CD4-positive, alpha-beta memory T cell (primary cell): ENCODE measurements at regions of chr1 and their contacts with region 1.

Region 1: DNA sequence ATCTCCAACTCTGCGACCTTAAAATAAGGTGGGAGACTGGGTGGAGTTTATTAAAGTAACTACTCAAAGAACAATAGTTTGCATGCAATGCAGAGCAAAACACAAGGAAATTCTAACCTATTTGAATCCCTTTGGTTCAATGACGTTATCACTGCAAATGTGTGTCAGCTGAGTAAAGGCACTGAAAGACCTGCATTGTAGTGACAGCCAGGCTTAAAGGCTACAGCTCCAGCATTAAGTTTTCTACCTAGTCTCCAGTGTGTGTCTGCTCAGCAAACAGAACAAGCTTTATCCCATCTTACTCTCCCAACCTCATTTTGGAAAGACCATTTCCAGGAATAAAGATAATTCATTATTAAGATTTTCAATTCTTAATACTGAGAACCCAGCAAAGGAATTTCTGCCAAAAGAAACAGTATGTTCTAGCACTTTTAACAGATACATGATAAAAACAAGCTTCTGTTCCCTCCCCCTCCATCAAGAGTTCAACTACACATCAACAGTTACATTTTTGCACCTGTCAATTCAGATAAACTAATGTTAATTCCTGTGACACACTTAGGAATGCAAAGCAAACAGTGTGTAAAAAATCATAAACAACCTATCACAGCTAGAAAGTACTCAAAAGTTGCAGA is 14.2 kb downstream of the PTP4A2 start:
- DNase-seq: no peak
- H3K4me3 ChIP-seq: no peak overlapping the region
- H3K4me3 Mint-ChIP-seq: peak overlapping the region; percentile 59 to 89 (median 80)
- H3K27ac ChIP-seq: peak overlapping the region; percentile 22
- H3K27ac Mint-ChIP-seq: peak overlapping the region; percentile 50 to 92 (median 81)
- H3K4me1 ChIP-seq: peaks cover 85% of the 10 kb centered on the region
- H3K4me1 Mint-ChIP-seq: peaks cover 53 to 88% (median 71%) of the 10 kb centered on the region in 4 donors
- H3K27me3 ChIP-seq: no peaks in the 10 kb centered on the region
- H3K27me3 Mint-ChIP-seq: no peaks in the 10 kb centered on the region

Region 2: DNA sequence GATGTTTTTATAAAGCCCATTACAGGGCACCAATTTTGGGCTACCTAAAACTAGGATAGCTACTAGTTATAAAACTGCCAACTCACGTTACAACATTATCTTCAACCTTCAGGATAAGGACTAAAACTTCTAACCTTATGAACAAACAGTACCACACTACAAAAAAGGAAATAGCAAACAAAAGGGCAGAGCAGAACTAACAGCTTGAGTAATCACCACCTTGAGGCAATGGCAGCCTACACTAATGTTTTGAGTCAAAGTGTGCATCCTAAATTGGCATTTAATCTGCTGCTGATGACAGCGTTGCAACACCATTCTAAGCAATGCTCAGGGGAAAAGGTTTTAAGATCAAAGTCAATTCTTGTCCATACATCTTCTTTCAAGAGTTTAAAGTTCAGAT is 13.1 kb before region 1 on chr1:
- CTCF ChIA-PET with region 1: interaction called, 4 read pairs
- POLR2A ChIA-PET with region 1: interaction called, 10 read pairs
- intact Hi-C with region 1: loop called (anchors 2 kb)
- DNase-seq: no peak
- H3K4me3 ChIP-seq: no peak overlapping the region
- H3K4me3 Mint-ChIP-seq: peak overlapping the region in 4 of 8 donors; percentile 7 to 22 (median 20)
- H3K27ac ChIP-seq: peak overlapping the region; percentile 37
- H3K27ac Mint-ChIP-seq: peak overlapping the region; percentile 0 to 86 (median 69)
- H3K4me1 ChIP-seq: peaks cover 50% of the 10 kb centered on the region
- H3K4me1 Mint-ChIP-seq: peaks cover 33 to 53% (median 45%) of the 10 kb centered on the region in 4 donors
- H3K27me3 ChIP-seq: no peaks in the 10 kb centered on the region
- H3K27me3 Mint-ChIP-seq: no peaks in the 10 kb centered on the region

Region 3: DNA sequence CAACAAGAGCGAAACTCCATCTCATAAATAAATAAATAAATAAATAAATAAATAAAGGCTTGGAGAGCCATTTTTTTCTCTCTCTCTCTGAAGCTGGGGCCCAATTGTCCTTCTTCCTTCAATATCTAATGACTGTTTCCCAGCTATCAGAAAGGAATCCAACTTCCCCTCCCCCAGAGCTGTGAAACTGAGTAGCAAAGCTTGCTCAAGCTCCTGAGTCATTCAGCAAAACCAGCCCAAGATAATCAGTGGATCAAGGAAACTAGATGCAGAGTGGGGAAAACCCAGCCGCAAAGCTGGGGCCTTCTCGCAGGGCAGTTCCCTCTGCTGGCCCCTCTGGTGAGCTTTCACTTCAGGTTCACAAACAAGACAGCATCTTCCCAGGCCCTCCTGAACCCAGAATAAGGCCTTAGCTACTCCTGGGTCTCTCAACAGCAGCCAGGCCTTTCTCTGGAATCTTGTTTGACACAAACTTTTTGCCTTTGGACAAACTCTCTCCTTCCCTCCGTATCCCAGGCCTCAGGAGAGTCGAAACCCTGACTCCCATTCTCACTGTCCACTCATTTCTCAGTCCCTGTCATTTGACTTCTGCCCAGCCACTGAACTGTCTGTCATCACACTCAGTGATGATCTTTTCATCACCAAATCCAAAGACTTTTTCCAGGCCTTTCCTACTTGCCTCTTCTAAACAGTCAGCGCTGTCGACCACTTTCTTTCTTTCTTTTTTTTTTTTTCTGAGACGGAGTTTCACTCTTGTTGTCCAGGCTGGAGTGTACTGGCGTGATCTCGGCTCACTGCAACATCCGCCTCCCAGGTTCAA is 32.1 kb after region 1 on chr1:
- CTCF ChIA-PET with region 1: interaction called, 8 read pairs
- POLR2A ChIA-PET with region 1: interaction called, 13 read pairs
- intact Hi-C with region 1: loop called (anchors 5 kb)
- DNase-seq: peak; percentile 72 to 93 (median 76)
- H3K4me3 ChIP-seq: no peak overlapping the region
- H3K4me3 Mint-ChIP-seq: peak overlapping the region in 7 of 8 donors; percentile 70 to 86 (median 78)
- H3K27ac ChIP-seq: peak overlapping the region; percentile 78
- H3K27ac Mint-ChIP-seq: peak overlapping the region; percentile 91 to 96 (median 93)
- H3K4me1 ChIP-seq: peaks cover 70% of the 10 kb centered on the region
- H3K4me1 Mint-ChIP-seq: peaks cover 49 to 85% (median 63%) of the 10 kb centered on the region in 4 donors
- H3K27me3 ChIP-seq: no peaks in the 10 kb centered on the region
- H3K27me3 Mint-ChIP-seq: no peaks in the 10 kb centered on the region